MCF 10A (cell line): ENCODE measurements at regions of chr6 and their contacts with region 1.

Region 1: DNA sequence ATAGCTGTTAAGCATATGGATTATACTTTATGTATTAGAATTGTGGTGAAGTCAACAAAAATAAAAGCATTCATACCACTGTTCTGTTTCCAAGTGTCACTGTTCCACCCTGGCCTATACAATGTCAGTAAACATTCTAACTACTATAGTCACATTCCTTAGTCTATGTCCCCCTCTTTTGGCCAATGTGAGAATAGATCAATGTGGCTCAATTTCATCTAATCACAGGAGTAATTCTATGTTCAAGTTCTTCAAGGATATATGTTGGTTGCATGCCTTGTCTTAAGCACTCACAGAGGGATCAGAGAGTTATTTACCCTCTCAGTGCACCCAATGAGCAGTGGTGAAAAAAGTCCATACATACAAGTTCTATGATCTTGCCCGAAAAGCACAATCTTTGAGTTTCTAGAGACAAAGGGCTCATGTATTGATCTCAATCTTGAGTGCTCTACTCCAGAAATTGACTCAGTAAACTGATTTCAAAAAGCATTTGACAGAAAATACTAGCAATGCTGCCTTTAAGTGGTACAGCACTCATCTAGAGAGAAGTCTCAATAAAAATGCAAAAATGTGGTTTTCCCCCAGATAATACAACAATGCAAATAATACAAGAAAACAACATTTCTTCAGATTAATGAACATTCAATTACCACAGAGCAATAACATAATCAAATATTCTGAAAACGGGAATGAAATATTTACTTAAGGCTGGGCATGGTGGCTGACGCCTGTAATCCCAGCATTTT is 16.5 kb downstream of the SMLR1 start:
- DNase-seq: peak; percentile 71
- H3K4me3 Mint-ChIP-seq: no peak overlapping the region
- H3K27ac Mint-ChIP-seq: no peak overlapping the region
- H3K4me1 Mint-ChIP-seq: peaks cover 6% of the 10 kb centered on the region
- H3K27me3 Mint-ChIP-seq: no peaks in the 10 kb centered on the region
- CTCF ChIP-seq: peak; percentile 53

Region 2: GRCh38 chr6:130037207-130037811 is 806.4 kb before region 1 on chr6:
- CTCF ChIA-PET with region 1: interaction called, 3 read pairs
- POLR2A ChIA-PET with region 1: no interaction called
- intact Hi-C with region 1: loop called (anchors 1 kb)
- DNase-seq: peak; percentile 28
- H3K4me3 Mint-ChIP-seq: no peak overlapping the region
- H3K27ac Mint-ChIP-seq: no peak overlapping the region
- H3K4me1 Mint-ChIP-seq: peaks cover 7% of the 10 kb centered on the region
- H3K27me3 Mint-ChIP-seq: no peaks in the 10 kb centered on the region
- CTCF ChIP-seq: peak; percentile 47

Region 3: DNA sequence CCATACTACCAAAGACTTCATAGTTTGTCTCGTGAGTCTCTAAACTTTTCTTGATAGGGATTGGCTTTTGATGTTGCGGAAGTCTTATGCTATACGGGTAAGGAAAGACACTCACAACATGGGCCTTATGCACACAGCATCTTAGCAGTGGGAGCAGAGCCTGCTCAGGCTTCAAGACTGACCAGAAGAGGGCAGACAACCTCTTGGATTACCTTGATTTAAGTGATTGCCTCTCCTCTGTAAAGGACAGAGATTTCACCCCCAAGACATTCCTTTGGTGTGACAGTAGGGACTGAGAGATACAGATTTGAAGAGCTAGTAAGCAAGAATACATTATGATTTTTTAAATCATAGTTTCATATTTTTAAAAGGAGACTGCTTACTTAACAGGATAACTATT is 549.9 kb before region 1 on chr6:
- CTCF ChIA-PET with region 1: interaction called, 5 read pairs
- POLR2A ChIA-PET with region 1: no interaction called
- intact Hi-C with region 1: loop called (anchors 1 kb)
- DNase-seq: peak; percentile 66
- H3K4me3 Mint-ChIP-seq: no peak overlapping the region
- H3K27ac Mint-ChIP-seq: no peak overlapping the region
- H3K4me1 Mint-ChIP-seq: no peaks in the 10 kb centered on the region
- H3K27me3 Mint-ChIP-seq: peaks cover 7% of the 10 kb centered on the region
- CTCF ChIP-seq: peak; percentile 46

Region 4: GRCh38 chr6:130322673-130323268 is 521.0 kb before region 1 on chr6:
- CTCF ChIA-PET with region 1: interaction called, 11 read pairs
- POLR2A ChIA-PET with region 1: interaction called, 3 read pairs
- intact Hi-C with region 1: loop called (anchors 1 kb)
- DNase-seq: peak; percentile 64
- H3K4me3 Mint-ChIP-seq: no peak overlapping the region
- H3K27ac Mint-ChIP-seq: no peak overlapping the region
- H3K4me1 Mint-ChIP-seq: peaks cover 9% of the 10 kb centered on the region
- H3K27me3 Mint-ChIP-seq: peaks cover 24% of the 10 kb centered on the region
- CTCF ChIP-seq: peak; percentile 78